Calu3 (cell line): ENCODE measurements at regions of chr3 and their contacts with region 1.

Region 1: GRCh38 chr3:152574461-152575079 is 260.4 kb upstream of the P2RY1 start:
- DNase-seq: peak; percentile 60
- H3K4me3 Mint-ChIP-seq: no peak overlapping the region
- H3K27ac Mint-ChIP-seq: no peak overlapping the region
- H3K4me1 Mint-ChIP-seq: no peaks in the 10 kb centered on the region
- H3K27me3 Mint-ChIP-seq: no peaks in the 10 kb centered on the region
- CTCF ChIP-seq: peak; percentile 47

Region 2: DNA sequence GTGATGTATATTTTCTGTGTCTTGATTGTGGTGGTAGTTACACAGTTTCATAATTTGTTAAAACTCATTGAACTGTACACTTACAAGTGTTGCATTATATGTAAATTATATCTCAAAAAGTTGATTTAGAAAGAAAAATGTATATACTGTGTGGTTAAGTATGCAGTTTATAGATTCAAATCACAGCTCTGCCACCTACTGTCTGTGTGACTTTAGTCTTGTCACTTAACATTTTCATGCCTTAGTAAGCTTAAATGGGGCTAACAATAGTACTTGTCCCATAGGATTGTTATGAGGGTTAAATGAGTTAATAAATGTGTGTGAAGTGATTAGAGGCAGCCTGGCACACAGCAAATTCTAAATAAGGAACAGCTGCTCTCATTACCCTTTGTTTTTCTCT is 139.4 kb after region 1 on chr3:
- CTCF ChIA-PET with region 1: no interaction called
- intact Hi-C with region 1: loop called (anchors 5 kb)
- DNase-seq: no peak
- H3K4me3 Mint-ChIP-seq: no peak overlapping the region
- H3K27ac Mint-ChIP-seq: no peak overlapping the region
- H3K4me1 Mint-ChIP-seq: peaks cover 3% of the 10 kb centered on the region
- H3K27me3 Mint-ChIP-seq: no peaks in the 10 kb centered on the region
- CTCF ChIP-seq: no peak